ENCODE measurements at regions of chr1 and their contacts with region 1.

Region 1: DNA sequence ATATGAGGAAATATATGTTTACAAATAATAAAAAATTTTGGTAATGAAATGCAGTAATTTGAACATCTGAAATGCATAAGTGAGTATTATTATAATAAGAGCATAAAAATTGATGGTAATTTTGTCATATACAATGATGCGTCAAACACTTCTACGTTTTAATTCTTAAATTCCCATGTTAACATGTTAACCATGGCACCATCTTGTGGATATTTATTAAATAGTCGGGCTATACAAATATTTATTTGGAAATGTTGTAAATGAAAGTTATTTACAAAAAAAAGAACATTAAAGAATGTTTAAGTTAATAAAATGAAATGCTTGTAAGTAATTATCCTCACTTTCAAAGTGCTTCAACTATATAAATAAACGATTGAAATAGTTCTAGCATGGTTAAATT is 57.2 kb upstream of the C1orf185 start:
- DNase-seq: no peak
- H3K4me3 ChIP-seq: no peak overlapping the region
- H3K27ac ChIP-seq: no peak overlapping the region
- H3K4me1 ChIP-seq: no peaks in the 10 kb centered on the region
- H3K27me3 ChIP-seq: no peaks in the 10 kb centered on the region
- CTCF ChIP-seq: peak; percentile 58

Region 2: GRCh38 chr1:50774759-50775351 is 270.0 kb before region 1 on chr1:
- intact Hi-C with region 1: loop called (anchors 10 kb)
- DNase-seq: no peak
- H3K4me3 ChIP-seq: no peak overlapping the region
- H3K27ac ChIP-seq: no peak overlapping the region
- H3K4me1 ChIP-seq: no peaks in the 10 kb centered on the region
- H3K27me3 ChIP-seq: no peaks in the 10 kb centered on the region
- CTCF ChIP-seq: peak; percentile 81

Region 3: DNA sequence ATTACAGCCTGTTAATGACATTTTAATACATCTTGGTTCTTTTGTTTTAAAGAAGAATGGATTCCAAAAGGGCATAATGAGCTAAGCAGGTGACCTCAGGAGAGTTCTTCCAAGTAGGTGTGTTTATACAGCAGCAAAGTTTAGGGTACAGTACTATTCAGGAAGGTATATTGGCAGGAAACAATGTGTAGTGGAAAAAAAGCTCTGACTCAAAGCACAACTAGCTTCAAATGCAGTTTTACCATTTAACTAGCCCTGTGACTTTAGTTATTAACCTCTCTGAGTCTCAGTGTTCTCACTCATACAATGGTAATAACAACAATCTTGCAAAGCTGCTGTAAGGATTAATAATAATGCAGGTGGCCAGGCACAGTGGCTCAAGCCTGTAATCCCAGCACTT is 114.6 kb before region 1 on chr1:
- intact Hi-C with region 1: loop called (anchors 10 kb)
- DNase-seq: no peak
- H3K4me3 ChIP-seq: no peak overlapping the region
- H3K27ac ChIP-seq: no peak overlapping the region
- H3K4me1 ChIP-seq: peaks cover 10% of the 10 kb centered on the region
- H3K27me3 ChIP-seq: no peaks in the 10 kb centered on the region
- CTCF ChIP-seq: no peak

Region 4: GRCh38 chr1:51009381-51009780 is 35.5 kb before region 1 on chr1:
- intact Hi-C with region 1: no loop called
- DNase-seq: no peak
- H3K4me3 ChIP-seq: no peak overlapping the region
- H3K27ac ChIP-seq: no peak overlapping the region
- H3K4me1 ChIP-seq: no peaks in the 10 kb centered on the region
- H3K27me3 ChIP-seq: no peaks in the 10 kb centered on the region
- CTCF ChIP-seq: no peak

Region 5: DNA sequence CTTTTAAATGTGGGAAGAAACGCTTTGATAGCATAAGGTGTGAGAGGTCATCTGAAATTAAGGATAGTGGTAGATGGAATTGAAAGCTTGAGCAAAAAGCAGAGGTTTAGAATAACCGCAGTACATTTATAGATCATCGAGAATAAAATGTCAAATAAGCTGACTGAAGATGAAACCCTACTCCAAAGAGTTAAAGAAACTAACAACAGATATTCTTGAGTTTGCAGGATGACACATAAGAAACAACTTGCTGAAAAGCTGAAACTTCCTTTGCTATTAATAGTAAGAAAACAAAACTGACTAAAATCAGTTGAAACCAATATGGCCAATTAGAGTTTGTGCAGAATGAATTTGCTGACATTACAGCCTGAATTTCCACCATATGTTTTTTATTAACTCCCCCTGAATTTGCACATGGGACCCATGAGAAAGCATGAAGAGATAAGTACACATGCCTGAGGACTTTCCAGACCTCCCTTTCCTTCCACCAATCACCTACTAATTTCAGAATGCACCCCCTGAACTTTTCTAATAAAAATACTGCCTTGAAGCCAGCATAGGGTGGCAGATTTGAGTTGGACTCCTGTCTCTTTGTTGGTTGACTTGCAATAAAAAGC is 55.5 kb after region 1 on chr1:
- intact Hi-C with region 1: no loop called
- DNase-seq: no peak
- H3K4me3 ChIP-seq: no peak overlapping the region
- H3K27ac ChIP-seq: no peak overlapping the region
- H3K4me1 ChIP-seq: no peaks in the 10 kb centered on the region
- H3K27me3 ChIP-seq: peaks cover 15% of the 10 kb centered on the region
- CTCF ChIP-seq: no peak

Region 6: DNA sequence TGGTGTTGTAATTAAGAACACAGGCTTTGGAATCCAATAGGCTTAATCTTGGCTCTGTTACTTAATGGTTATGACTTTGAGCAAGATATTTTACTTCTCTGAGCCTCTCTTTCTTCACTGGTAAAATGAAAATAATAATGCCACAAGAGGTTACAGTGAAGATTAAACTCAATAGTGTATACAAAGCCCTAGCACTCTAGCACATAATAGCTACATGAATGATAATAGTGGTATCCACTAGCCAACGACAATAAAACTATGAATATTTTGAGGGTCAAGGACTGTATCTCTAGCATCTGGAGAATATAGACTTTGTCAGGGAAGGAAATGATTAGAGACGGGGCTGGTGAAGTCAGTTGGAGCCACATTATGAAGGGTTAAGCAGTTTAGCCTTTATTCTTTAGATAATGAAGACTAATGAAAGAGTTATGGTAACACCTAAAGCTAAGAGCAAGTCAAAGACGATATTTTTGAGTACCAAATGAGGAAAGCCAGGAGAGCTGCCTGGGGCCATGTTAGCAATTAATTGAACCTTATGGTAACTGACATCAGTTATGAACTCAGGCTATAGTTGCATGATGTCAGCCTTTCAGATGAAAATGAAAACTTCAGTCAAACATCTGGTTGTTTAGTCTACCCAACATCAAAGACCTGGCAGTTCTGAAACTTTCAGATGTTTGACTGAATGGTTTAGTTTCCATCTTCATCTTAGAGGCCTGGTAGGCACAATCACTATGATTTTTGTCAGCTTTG is 158.5 kb after region 1 on chr1:
- intact Hi-C with region 1: no loop called
- DNase-seq: no peak
- H3K4me3 ChIP-seq: no peak overlapping the region
- H3K27ac ChIP-seq: no peak overlapping the region
- H3K4me1 ChIP-seq: no peaks in the 10 kb centered on the region
- H3K27me3 ChIP-seq: no peaks in the 10 kb centered on the region
- CTCF ChIP-seq: no peak